H1 (cell line): ENCODE measurements at regions of chr6 and their contacts with region 1.

Region 1: GRCh38 chr6:127302728-127303660 is 36.3 kb downstream of the RNF146 start:
- DNase-seq: no peak
- H3K4me3 ChIP-seq: no peak overlapping the region
- H3K27ac ChIP-seq: no peak overlapping the region
- H3K4me1 ChIP-seq: peaks cover 0 to 4% (median 1%) of the 10 kb centered on the region in 4 experiments; a peak in 3 of 7 replicates
- H3K27me3 ChIP-seq: no peaks in the 10 kb centered on the region
- CTCF ChIP-seq: peak in 2 of 3 experiments; percentile 7 to 60; a peak in 2 of 4 replicates
- EP300 ChIP-seq: no peak
- POLR2A ChIP-seq: no peak
- RAD21 ChIP-seq: peak; percentile 48 to 59

Region 2: GRCh38 chr6:127022302-127022701 is 280.7 kb before region 1 on chr6:
- CTCF ChIA-PET with region 1: no interaction called
- POLR2A ChIA-PET with region 1: no interaction called
- DNase-seq: no peak
- H3K4me3 ChIP-seq: no peak overlapping the region
- H3K27ac ChIP-seq: no peak overlapping the region
- H3K4me1 ChIP-seq: no peaks in the 10 kb centered on the region
- H3K27me3 ChIP-seq: no peaks in the 10 kb centered on the region
- CTCF ChIP-seq: no peak
- EP300 ChIP-seq: no peak
- POLR2A ChIP-seq: no peak
- RAD21 ChIP-seq: no peak

Region 3: GRCh38 chr6:127291495-127291894 is 11.5 kb before region 1 on chr6:
- CTCF ChIA-PET with region 1: interaction called, 15 read pairs
- POLR2A ChIA-PET with region 1: interaction called, 6 read pairs
- DNase-seq: no peak
- H3K4me3 ChIP-seq: no peak overlapping the region; a peak in 1 of 8 replicates
- H3K27ac ChIP-seq: no peak overlapping the region
- H3K4me1 ChIP-seq: peaks cover 0 to 5% (median 0%) of the 10 kb centered on the region in 4 experiments; a peak in 3 of 7 replicates
- H3K27me3 ChIP-seq: no peaks in the 10 kb centered on the region
- CTCF ChIP-seq: no peak
- EP300 ChIP-seq: no peak
- POLR2A ChIP-seq: no peak
- RAD21 ChIP-seq: no peak

Region 4: DNA sequence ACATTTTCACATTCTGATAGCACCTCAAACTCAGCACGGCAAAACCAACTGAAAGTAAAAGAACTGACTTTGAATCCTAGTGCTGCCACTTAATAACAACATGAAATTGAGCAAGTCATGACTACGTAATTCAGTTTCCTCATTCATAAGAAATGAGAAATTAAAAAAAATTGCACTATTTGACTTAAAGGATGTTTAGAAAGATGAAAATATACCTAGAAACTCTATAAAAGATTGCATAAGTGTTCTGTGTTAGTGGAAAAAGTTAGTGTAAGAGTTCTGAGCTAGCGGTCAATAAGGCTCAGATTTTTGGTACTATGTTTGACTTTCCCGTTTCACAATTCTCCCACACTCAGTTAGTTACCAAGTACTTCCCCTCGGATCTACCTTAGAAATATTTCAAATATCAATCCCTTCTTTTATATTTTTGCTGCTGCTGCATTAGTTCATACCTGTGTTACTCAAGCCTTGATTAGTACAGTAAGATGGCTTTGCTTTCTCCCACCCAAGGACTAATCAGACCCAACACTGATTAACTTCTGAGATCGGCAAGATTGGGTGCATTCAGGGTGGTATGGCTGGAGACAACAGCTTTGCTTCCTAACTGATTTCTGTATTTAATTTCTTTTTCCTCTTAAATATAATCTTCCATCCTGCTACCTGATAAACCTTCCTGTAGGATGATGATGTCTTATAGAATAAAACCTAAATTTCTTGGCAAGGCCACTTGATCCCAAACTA is 14.6 kb after region 1 on chr6:
- CTCF ChIA-PET with region 1: interaction called, 17 read pairs
- POLR2A ChIA-PET with region 1: interaction called, 3 read pairs
- DNase-seq: no peak
- H3K4me3 ChIP-seq: no peak overlapping the region
- H3K27ac ChIP-seq: no peak overlapping the region
- H3K4me1 ChIP-seq: no peaks in the 10 kb centered on the region
- H3K27me3 ChIP-seq: no peaks in the 10 kb centered on the region
- CTCF ChIP-seq: no peak
- EP300 ChIP-seq: no peak
- POLR2A ChIP-seq: no peak
- RAD21 ChIP-seq: no peak

Region 5: GRCh38 chr6:127328043-127328609 is 25.1 kb after region 1 on chr6:
- CTCF ChIA-PET with region 1: interaction called, 17 read pairs
- POLR2A ChIA-PET with region 1: interaction called, 3 read pairs
- DNase-seq: no peak
- H3K4me3 ChIP-seq: no peak overlapping the region
- H3K27ac ChIP-seq: no peak overlapping the region
- H3K4me1 ChIP-seq: peaks cover 0 to 4% (median 0%) of the 10 kb centered on the region in 4 experiments; a peak in 1 of 7 replicates
- H3K27me3 ChIP-seq: no peaks in the 10 kb centered on the region
- CTCF ChIP-seq: no peak
- EP300 ChIP-seq: no peak
- POLR2A ChIP-seq: no peak
- RAD21 ChIP-seq: no peak

Region 6: GRCh38 chr6:127383988-127384387 is 81.0 kb after region 1 on chr6:
- CTCF ChIA-PET with region 1: no interaction called
- POLR2A ChIA-PET with region 1: no interaction called
- DNase-seq: no peak
- H3K4me3 ChIP-seq: no peak overlapping the region
- H3K27ac ChIP-seq: no peak overlapping the region
- H3K4me1 ChIP-seq: no peaks in the 10 kb centered on the region
- H3K27me3 ChIP-seq: no peaks in the 10 kb centered on the region; a peak in 1 of 7 replicates
- CTCF ChIP-seq: no peak
- EP300 ChIP-seq: no peak
- POLR2A ChIP-seq: no peak
- RAD21 ChIP-seq: no peak

Region 7: DNA sequence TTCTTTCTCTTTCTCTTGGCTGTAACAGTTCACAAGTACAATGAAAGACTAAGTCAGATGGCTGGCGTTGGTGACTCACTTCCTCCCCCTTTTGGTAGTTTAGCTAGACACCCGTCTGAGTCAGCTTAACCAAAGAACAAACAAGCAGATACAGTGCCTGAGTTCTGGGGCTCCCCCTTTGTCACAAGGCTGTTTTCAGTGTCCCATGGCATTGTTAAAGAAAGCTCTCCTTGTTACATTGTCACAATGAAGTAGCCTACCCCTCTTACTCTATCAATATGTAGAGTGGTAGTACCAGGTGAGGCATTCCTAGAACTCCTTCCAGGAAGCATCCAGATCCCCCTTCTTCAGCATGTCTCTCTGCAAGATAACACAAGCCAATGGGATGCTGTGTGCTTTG is 117.6 kb after region 1 on chr6:
- CTCF ChIA-PET with region 1: interaction called, 25 read pairs
- POLR2A ChIA-PET with region 1: no interaction called
- DNase-seq: peak in 1 of 2 experiments; percentile 86
- H3K4me3 ChIP-seq: no peak overlapping the region
- H3K27ac ChIP-seq: no peak overlapping the region
- H3K4me1 ChIP-seq: peaks cover 0 to 4% (median 0%) of the 10 kb centered on the region in 4 experiments; a peak in 2 of 7 replicates
- H3K27me3 ChIP-seq: no peaks in the 10 kb centered on the region
- CTCF ChIP-seq: peak; percentile 23 to 76 (median 70)
- EP300 ChIP-seq: no peak
- POLR2A ChIP-seq: no peak
- RAD21 ChIP-seq: peak; percentile 80 to 81

Region 8: DNA sequence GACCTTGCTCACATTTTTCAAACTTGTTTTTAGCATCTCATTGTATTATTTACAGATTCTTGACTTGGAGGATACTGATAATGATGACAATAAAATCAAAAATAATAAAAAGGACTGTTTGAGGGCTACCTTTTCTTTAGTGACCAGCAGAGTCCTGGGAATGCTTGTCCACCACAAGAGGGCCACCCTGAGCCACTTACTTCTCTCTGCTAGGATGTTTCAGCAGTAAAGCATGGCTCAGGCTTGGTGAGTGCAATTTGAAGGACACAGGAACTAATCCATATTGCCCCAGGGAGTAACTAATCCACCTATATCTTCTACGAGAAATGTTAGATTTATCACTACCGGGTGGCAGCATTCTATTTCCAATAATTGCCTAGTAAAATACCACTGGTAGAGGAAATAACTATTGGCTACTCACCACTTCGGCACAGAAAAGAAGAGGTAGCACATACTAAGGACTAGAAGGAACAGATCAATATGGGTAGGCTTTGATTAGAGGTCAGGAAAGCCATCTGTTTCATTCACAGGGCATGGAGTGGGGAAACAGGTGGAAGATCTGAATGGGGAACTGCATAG is 162.0 kb after region 1 on chr6:
- CTCF ChIA-PET with region 1: interaction called, 17 read pairs
- POLR2A ChIA-PET with region 1: no interaction called
- DNase-seq: peak in 1 of 2 experiments; percentile 74
- H3K4me3 ChIP-seq: no peak overlapping the region
- H3K27ac ChIP-seq: no peak overlapping the region
- H3K4me1 ChIP-seq: no peaks in the 10 kb centered on the region
- H3K27me3 ChIP-seq: no peaks in the 10 kb centered on the region
- CTCF ChIP-seq: peak; percentile 60 to 91 (median 84)
- EP300 ChIP-seq: no peak
- POLR2A ChIP-seq: no peak
- RAD21 ChIP-seq: peak; percentile 92 to 94

Region 9: DNA sequence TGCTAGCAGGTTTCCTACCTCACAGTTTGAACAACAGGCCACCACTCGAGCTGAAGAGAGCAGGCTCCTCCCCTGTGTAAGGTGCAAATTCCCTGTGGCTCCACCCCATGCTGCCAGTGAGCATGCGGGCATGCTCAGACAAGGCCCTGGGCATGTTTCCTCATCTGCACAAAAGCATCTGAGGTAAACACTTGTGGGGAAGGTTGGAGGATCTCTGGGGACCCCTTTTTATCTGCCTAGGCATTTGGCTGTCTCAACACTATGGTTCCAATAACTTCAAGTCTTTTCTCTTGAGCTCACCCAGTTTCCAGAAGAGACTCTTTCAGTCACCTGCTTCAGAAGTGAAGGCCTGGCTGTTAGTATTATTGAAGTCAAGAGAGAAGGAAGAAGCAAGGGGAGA is 283.4 kb after region 1 on chr6:
- CTCF ChIA-PET with region 1: no interaction called
- POLR2A ChIA-PET with region 1: no interaction called
- DNase-seq: no peak
- H3K4me3 ChIP-seq: no peak overlapping the region
- H3K27ac ChIP-seq: no peak overlapping the region
- H3K4me1 ChIP-seq: no peaks in the 10 kb centered on the region
- H3K27me3 ChIP-seq: no peaks in the 10 kb centered on the region
- CTCF ChIP-seq: no peak
- EP300 ChIP-seq: no peak
- POLR2A ChIP-seq: no peak
- RAD21 ChIP-seq: no peak